AG04449 (cell line): ENCODE measurements at regions of chr10 and their contacts with region 1.

Region 1: GRCh38 chr10:24331457-24331856 is 122.5 kb downstream of the KIAA1217 start:
- DNase-seq: no peak
- H3K4me3 ChIP-seq: no peak overlapping the region
- CTCF ChIP-seq: no peak

Region 2: DNA sequence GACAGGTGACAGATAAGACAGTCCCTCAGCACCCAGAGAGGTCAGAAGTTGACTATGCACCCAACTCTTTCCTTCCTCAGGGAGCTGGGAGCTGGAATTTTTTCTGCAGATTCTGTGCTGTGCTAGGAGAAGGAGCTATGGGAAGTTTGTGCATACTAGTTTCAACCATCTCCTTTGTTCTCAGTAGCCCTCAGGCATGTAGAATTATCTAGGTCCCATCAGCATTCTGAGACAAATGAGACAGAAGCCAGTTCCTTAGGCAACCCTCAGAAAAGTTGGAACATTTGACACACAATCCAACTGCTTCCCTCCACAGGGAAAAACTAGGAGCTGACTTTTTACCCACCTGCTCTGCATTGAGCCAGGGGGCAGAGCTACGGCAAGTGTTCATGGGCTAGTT is 262.7 kb before region 1 on chr10:
- CTCF ChIA-PET with region 1: no interaction called
- POLR2A ChIA-PET with region 1: no interaction called
- DNase-seq: no peak
- H3K4me3 ChIP-seq: no peak overlapping the region
- CTCF ChIP-seq: no peak

Region 3: GRCh38 chr10:24197263-24197662 is 134.2 kb before region 1 on chr10:
- CTCF ChIA-PET with region 1: interaction called, 10 read pairs
- POLR2A ChIA-PET with region 1: no interaction called
- DNase-seq: no peak
- H3K4me3 ChIP-seq: no peak overlapping the region
- CTCF ChIP-seq: no peak

Region 4: DNA sequence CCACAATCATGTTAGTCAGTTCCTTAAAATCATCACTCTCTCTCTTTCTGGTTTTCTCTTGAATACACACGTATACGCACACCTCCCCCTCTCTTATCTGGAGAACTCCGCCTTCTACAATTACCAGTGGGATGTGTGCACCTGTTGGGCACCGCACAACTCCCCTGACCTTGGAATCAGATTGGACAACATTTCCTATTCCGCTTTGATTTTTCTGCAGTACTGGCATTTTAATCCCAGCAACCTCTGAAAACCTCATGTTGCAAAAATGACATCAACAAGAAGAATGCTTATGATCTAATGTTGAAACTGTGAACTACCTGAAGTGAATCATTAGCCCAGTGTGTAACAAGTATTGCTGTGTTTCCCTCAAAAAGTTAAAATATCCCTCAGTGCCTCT is 12.9 kb before region 1 on chr10:
- CTCF ChIA-PET with region 1: interaction called, 14 read pairs
- POLR2A ChIA-PET with region 1: no interaction called
- DNase-seq: no peak
- H3K4me3 ChIP-seq: no peak overlapping the region
- CTCF ChIP-seq: no peak

Region 5: DNA sequence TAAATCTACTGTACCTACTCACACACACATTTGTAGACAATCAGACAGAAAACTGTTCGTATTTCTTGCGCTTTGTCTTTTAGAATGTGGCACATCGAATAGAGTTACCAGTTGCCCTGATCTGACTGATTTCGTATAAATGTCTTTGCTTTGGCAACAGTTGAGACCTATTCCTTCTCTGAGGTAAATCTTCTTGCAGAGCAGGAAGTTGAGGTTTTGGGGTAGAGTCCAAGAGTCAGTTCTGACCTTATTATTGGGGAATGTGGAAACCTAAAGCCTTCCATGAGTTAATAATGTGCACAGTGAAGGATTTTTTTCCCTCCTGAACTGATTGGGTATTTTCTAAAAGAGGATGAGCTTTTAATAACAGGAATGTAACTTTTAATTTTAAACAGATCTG is 12.8 kb after region 1 on chr10:
- CTCF ChIA-PET with region 1: interaction called, 13 read pairs
- POLR2A ChIA-PET with region 1: interaction called, 6 read pairs
- DNase-seq: peak; percentile 98
- H3K4me3 ChIP-seq: no peak overlapping the region
- CTCF ChIP-seq: no peak